ENCODE measurements at regions of chr6 and their contacts with region 1.

Region 1: DNA sequence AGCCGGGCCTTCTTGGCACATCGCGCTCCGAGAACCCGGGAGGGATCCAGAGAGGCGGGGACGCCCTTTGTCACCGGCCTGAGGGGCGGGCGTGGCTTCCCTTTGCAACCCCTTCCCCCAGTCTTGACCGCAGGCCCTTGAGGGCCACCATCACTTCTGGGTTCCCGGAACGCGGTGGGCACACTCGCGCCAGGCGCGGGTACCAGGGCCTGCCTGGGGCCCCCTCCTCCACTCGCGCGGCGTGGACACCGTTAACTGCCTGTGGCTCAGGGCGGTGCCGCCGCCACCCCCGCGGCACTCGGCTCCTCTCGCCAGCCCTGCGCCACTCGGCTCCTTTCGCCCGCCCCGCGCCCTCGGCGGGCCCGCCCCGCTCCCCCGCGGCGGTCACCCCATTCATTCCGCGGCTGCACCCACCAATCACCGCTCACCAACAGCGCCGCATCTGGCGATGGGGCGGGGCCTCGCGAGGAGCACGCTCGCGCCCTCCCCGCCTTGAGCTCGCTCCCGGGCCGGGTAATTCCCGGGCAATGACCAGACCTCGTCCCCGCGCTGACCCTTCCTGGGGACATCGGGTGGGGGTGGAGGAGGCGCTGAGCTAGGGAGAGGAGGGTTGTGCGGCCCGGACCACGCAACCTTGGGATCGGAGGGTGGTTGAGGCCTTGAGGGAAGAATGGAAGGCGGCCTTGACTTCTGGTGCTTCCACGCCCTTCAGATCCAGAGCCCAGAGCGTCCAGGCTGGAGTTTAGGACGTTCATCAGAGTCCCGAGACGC is 10.5 kb upstream of the ELOVL5 start:
- DNase-seq: peak; percentile 92
- ATAC-seq: peak; percentile 96
- H3K4me3 ChIP-seq: peak overlapping the region; percentile 58 to 82 (median 67)
- H3K27ac ChIP-seq: peak overlapping the region; percentile 82
- H3K4me1 ChIP-seq: peaks cover 42% of the 10 kb centered on the region
- H3K27me3 ChIP-seq: peaks cover 0 to 16% of the 10 kb centered on the region in 2 experiments; a peak in 3 of 5 replicates
- CTCF ChIP-seq: peak; percentile 29
- EP300 ChIP-seq: peak; percentile 74 to 82
- POLR2A ChIP-seq: peak; percentile 67 to 94
- RAD21 ChIP-seq: peak; percentile 33; the same call in 1 of the 2 replicates

Region 2: DNA sequence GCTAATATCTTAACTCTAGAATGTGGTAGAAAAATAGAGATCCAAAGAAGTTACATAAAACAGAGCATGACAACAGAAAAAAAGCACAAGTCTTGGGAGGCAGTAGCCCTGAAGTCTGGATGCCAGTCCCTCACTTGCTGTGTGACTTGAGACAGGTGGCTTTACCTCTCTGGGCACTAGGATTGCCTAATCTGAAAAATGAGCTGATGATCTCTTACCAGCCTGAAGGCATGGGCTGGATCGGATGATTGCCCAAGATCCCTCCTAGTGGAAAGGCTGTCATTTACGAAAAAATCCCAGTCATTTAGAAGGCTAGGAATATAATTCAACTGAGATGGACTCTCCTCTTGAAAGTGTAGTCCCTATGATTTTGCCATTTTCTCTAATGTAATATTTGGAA is 199.7 kb before region 1 on chr6:
- CTCF ChIA-PET with region 1: no interaction called
- POLR2A ChIA-PET with region 1: no interaction called
- in situ Hi-C with region 1: no loop called
- intact Hi-C with region 1: no loop called
- DNase-seq: peak; percentile 33
- ATAC-seq: peak; percentile 52
- H3K4me3 ChIP-seq: no peak overlapping the region
- H3K27ac ChIP-seq: no peak overlapping the region
- H3K4me1 ChIP-seq: peaks cover 4% of the 10 kb centered on the region; the same call in 1 of the 2 replicates
- H3K27me3 ChIP-seq: no peaks in the 10 kb centered on the region
- CTCF ChIP-seq: no peak
- EP300 ChIP-seq: no peak
- POLR2A ChIP-seq: no peak
- RAD21 ChIP-seq: no peak

Region 3: GRCh38 chr6:53302678-53303360 is 56.4 kb before region 1 on chr6:
- CTCF ChIA-PET with region 1: no interaction called
- POLR2A ChIA-PET with region 1: interaction called, 10 read pairs
- in situ Hi-C with region 1: no loop called
- intact Hi-C with region 1: loop called (anchors 2 kb)
- DNase-seq: peak; percentile 39
- ATAC-seq: no peak
- H3K4me3 ChIP-seq: no peak overlapping the region
- H3K27ac ChIP-seq: no peak overlapping the region
- H3K4me1 ChIP-seq: peaks cover 71% of the 10 kb centered on the region
- H3K27me3 ChIP-seq: no peaks in the 10 kb centered on the region
- CTCF ChIP-seq: no peak
- EP300 ChIP-seq: no peak
- POLR2A ChIP-seq: no peak
- RAD21 ChIP-seq: no peak

Region 4: DNA sequence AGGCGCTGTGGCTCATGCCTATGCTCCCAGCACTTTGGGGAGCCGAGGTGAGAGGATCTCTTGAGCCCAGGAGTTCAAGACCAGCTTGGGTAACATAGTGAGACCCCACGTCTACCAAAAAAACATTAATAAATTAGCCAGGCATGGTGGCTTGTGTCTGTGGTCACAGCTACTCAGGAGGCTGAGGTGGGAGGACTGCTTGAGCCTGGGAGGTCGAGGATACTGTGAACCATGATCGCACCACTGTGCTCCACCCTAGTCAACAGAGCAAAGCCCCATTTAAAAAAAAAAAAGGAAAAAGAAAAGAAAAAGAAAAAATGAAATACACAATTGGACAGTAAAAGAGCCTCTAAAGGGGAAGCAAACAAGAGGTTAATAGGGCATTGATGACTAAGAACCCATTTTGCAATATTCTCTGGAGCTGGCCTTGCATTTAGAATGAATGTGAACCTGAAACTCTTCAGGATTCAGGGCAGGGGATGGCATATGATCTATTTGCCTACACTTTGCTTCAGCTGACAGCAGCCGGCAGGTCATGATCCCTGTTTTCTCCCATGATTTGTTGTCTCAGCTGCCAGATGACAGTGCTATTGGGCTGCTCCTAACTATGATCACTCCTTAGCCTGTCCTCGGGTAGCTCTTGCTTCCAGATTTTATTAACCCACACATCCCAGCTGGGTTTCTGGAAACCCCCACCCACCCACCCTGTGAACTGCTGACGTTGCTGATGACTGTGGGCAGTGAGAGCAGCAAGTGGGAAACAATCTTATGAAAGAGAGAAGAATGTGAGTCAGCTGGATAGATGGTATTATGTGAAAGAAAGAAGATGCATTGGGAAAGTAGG is 73.3 kb after region 1 on chr6:
- CTCF ChIA-PET with region 1: no interaction called
- POLR2A ChIA-PET with region 1: interaction called, 4 read pairs
- in situ Hi-C with region 1: no loop called
- intact Hi-C with region 1: loop called (anchors 5 kb)
- DNase-seq: peak; percentile 93
- ATAC-seq: peak; percentile 93
- H3K4me3 ChIP-seq: no peak overlapping the region
- H3K27ac ChIP-seq: no peak overlapping the region
- H3K4me1 ChIP-seq: peaks cover 42% of the 10 kb centered on the region
- H3K27me3 ChIP-seq: no peaks in the 10 kb centered on the region; a peak in 1 of 5 replicates
- CTCF ChIP-seq: no peak
- EP300 ChIP-seq: peak in 1 of 2 experiments; percentile 72; a peak in 2 of 4 replicates
- POLR2A ChIP-seq: no peak
- RAD21 ChIP-seq: no peak

Measured in HepG2 (cell line).